ENCODE measurements at regions of chr14 and their contacts with region 1.

Region 1: DNA sequence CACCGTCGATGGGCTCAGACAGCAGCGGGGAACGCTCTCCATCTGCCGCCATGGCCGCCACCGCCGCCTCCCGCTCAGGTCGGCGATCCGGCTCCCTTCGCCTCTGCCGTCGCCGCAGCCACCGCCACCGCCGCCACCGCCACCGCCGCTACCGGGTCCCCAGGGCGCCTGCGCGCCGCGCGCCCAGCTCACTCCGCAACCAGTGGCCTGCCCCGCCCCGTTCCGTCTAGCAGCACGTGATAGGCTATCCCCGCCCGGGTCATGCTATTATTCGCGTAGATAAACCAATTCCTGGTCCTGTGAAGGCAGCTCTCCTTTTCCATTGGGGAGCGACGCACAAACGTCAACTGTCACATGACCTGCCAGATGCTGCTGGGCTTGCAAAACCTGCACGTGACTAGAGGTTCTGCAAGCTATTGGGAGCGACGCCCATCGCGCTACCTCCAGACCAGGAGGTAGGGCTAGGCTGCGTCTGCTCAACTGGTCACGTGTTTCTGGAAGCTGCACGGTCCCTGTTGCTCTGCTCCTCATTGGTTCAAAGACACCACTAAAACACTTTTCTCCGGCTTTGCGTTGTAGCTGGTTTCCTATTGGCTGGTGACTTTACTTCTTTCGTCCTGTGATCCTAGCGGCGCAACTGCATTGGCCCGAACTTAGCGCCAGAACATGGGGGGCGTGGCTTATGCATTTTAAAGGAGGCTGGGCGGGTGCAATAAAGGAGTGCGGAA is at the start of gene PIP4P1:
- DNase-seq: peak; percentile 100
- ATAC-seq: peak; percentile 96
- H3K4me3 ChIP-seq: peak within 1 kb of the TSS; percentile 73
- H3K27ac ChIP-seq: peak within 1 kb of the TSS; percentile 87
- H3K4me1 ChIP-seq: peaks cover 6% of the 10 kb centered on the region
- H3K27me3 ChIP-seq: no peaks in the 10 kb centered on the region
- CTCF ChIP-seq: no peak
- EP300 ChIP-seq: no peak
- POLR2A ChIP-seq: peak; percentile 78
- RAD21 ChIP-seq: no peak
- polyA plus RNA-seq, gene PIP4P1: 19.1 to 41.6 TPM

Region 2: DNA sequence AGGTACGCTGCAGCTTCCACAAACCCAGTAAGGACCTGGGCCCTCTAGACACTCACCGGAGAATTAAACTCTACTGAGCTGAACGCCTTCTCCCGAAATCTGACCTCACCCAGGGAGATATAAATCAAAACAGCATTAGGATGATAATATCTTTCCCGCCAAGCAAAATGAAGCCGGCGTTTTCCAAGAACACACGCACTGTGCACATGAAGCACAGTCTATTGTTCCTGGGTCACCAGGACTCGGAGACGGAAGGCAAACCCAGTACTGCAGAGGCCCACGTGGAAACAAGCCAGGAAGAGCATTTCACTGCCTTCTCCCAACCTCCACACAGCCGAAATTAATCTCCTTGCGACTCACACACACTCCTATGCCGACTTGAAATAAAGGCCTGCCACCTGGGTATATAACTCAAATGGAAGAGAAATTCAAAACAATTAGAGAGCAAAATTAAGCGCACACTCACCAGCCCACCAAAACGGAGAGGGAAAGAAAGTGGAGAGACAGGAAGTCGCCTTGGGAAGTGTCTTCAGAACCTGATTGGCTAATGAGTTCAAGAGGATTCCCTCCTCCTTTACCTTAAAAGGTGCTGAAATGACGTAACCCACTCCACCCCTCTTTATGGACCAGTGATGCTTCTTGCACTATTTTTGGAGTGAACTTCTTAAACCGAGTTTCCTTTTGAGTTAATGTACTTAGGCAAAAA is 128.5 kb before region 1 on chr14 and contains the start of gene CCNB1IP1:
- CTCF ChIA-PET with region 1: interaction called, 13 read pairs
- POLR2A ChIA-PET with region 1: interaction called, 7 read pairs
- RAD21 ChIA-PET with region 1: interaction called, 9 read pairs
- SMC1A ChIA-PET with region 1: interaction called, 12 read pairs
- in situ Hi-C with region 1: no loop called
- intact Hi-C with region 1: loop called (anchors 2 kb)
- DNase-seq: peak; percentile 87
- ATAC-seq: peak; percentile 95
- H3K4me3 ChIP-seq: peak within 1 kb of the TSS; percentile 82
- H3K27ac ChIP-seq: peak within 1 kb of the TSS; percentile 85
- H3K4me1 ChIP-seq: peaks cover 6% of the 10 kb centered on the region; the same call in 1 of the 2 replicates
- H3K27me3 ChIP-seq: no peaks in the 10 kb centered on the region
- CTCF ChIP-seq: no peak
- EP300 ChIP-seq: no peak; a peak in 1 of 4 replicates
- POLR2A ChIP-seq: peak; percentile 56; the same call in 1 of the 2 replicates
- RAD21 ChIP-seq: no peak
- polyA plus RNA-seq, gene CCNB1IP1: 69.2 to 80.6 TPM

Region 3: GRCh38 chr14:20434701-20435581 is 26.5 kb before region 1 on chr14:
- CTCF ChIA-PET with region 1: interaction called, 3 read pairs
- POLR2A ChIA-PET with region 1: interaction called, 6 read pairs
- RAD21 ChIA-PET with region 1: no interaction called
- SMC1A ChIA-PET with region 1: no interaction called
- in situ Hi-C with region 1: no loop called
- intact Hi-C with region 1: loop called (anchors 1 kb)
- DNase-seq: no peak
- ATAC-seq: no peak
- H3K4me3 ChIP-seq: no peak overlapping the region
- H3K27ac ChIP-seq: no peak overlapping the region
- H3K4me1 ChIP-seq: no peaks in the 10 kb centered on the region
- H3K27me3 ChIP-seq: no peaks in the 10 kb centered on the region
- CTCF ChIP-seq: no peak
- EP300 ChIP-seq: no peak
- POLR2A ChIP-seq: no peak
- RAD21 ChIP-seq: no peak

Region 4: GRCh38 chr14:20503898-20504297 is 42.5 kb after region 1 on chr14:
- CTCF ChIA-PET with region 1: no interaction called
- POLR2A ChIA-PET with region 1: no interaction called
- RAD21 ChIA-PET with region 1: no interaction called
- SMC1A ChIA-PET with region 1: no interaction called
- in situ Hi-C with region 1: no loop called
- intact Hi-C with region 1: no loop called
- DNase-seq: no peak
- ATAC-seq: peak; percentile 27; the same call in 1 of the 3 replicates
- H3K4me3 ChIP-seq: no peak overlapping the region
- H3K27ac ChIP-seq: no peak overlapping the region
- H3K4me1 ChIP-seq: 0 out of 2 replicates have a peak, but pooled peaks cover 4% of the 10 kb centered on the region
- H3K27me3 ChIP-seq: no peaks in the 10 kb centered on the region
- CTCF ChIP-seq: no peak
- EP300 ChIP-seq: no peak
- POLR2A ChIP-seq: no peak
- RAD21 ChIP-seq: no peak

Measured in GM12878 (cell line).